ENCODE measurements at regions of chr12 and their contacts with region 1.

Region 1: DNA sequence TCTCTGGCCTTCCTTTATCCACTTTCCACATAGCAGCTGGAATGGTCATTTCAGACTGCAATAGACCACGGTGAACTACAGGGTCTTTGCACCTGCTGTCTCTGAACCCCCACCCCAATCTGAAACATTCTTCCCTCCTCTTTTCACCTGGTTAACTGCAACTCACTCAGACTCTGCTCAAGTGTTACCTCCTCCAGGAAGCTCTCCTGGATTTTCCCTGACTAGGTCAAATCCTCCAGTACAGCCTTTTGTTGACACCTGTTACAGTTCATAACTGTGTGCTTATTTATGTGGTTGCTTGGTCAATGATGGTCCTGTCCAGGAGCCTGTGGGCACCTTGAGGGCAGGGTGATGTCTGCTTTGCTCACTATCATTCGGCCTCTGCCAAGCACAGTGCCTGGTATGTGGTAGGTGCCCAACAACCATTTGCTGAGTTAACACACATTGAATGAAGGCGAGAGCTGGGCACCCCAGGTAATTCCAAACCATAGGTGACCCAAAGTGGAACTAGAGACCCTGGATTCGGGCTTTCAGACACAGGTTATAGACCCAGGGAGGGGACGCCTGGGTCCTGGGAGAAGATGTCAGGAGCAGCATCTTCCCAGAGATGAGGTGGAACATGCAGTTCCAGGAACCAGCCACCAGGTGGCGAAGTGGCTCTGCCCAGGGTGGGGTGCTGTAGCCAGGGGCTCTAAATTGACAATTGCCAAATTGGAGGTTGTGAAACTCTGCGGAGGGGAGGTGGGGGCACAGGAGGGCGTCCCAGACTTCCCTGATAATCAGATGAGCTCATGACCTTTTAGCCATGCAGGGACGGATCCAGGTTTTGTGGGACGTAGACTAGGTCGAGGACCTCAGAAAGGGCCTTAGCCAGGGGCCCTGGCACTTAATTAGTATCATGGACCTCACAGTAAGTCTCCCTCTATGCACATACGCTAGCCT is 28.1 kb downstream of the TRPV4 start:
- DNase-seq: peak; percentile 70 to 82 (median 75)
- ATAC-seq: peak; percentile 83 to 95 (median 93)
- H3K4me3 ChIP-seq: no peak overlapping the region
- H3K27ac ChIP-seq: no peak overlapping the region
- H3K4me1 ChIP-seq: peaks cover 0 to 4% (median 0%) of the 10 kb centered on the region in 4 donors
- H3K27me3 ChIP-seq: no peaks in the 10 kb centered on the region
- CTCF ChIP-seq: peak; percentile 95 to 99 (median 97)
- POLR2A ChIP-seq: no peak

Region 2: DNA sequence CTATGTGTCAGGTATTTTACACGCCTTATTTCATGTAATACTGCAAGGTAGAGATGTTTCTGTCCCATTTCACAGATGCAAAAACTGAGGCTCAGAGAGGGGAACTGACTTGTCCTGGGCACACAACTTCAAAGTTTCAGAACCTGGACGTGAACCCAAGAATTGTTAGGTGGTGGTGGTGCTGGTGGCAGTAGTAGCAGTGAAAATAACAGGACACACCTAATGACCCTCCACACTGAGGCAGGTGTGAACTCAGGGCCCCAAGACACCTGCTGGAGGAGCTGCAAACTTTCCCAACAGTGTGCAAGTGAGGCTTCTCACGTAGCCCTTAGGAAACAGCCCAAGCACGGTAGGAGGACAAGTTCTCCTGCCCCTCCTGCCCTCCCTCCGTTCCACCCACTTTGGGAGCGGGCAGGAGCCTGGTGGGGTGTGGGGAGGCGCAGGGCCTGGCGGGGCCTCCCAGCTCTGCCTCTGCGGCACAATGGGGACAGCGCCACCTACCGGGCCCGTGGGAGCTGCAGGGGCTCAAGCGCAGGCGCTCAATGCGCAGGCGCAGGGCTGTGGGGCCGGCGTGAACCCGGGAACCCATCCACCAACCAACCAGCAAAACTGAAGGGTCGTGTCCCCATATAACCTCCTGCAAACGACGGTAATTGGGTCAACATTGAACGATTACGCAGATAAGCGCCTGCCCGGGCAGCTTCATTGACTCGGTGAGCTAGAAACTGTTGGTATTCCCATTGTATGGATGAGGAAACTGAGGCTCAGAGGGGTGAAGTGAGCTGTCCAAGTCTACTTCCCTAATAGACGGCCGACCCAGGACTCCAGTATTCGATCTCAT is 40.1 kb after region 1 on chr12:
- intact Hi-C with region 1: loop called (anchors 2 to 5 kb)
- DNase-seq: peak; percentile 91 to 92 (median 91)
- ATAC-seq: peak; percentile 97 to 98 (median 97)
- H3K4me3 ChIP-seq: peak overlapping the region in 2 of 3 donors; percentile 3 to 18
- H3K27ac ChIP-seq: peak overlapping the region in 2 of 3 donors; percentile 22 to 29
- H3K4me1 ChIP-seq: peaks cover 0 to 7% (median 0%) of the 10 kb centered on the region in 4 donors
- H3K27me3 ChIP-seq: no peaks in the 10 kb centered on the region
- CTCF ChIP-seq: peak; percentile 99 to 100 (median 100)
- POLR2A ChIP-seq: no peak

Region 3: DNA sequence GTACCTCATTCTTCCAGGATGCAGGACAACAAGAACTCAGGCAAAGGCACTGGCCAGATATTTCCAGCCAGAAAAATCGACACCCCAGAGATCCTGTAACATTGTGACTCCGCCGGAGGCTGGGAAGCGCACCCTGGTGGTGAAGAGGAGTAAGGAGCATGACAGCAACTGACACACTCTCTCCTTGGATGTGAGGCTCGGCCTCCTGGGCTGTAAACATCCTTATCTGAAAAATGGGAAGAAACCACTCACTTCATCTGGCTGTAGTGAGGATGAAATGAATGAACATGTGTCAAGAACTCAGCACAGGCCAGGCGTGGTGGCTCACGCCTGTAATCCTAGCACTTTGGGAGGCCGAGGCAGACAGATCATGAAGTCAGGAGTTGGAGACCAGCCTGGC is 122.5 kb after region 1 on chr12:
- intact Hi-C with region 1: no loop called
- DNase-seq: no peak
- ATAC-seq: peak; percentile 78 to 82 (median 78)
- H3K4me3 ChIP-seq: no peak overlapping the region
- H3K27ac ChIP-seq: no peak overlapping the region
- H3K4me1 ChIP-seq: no peaks in the 10 kb centered on the region
- H3K27me3 ChIP-seq: no peaks in the 10 kb centered on the region
- CTCF ChIP-seq: peak; percentile 55 to 66 (median 60)
- POLR2A ChIP-seq: no peak